B cell (primary cell): ENCODE measurements at regions of chr9 and their contacts with region 1.

Region 1: GRCh38 chr9:113591001-113591898 is 127.7 kb downstream of the RGS3 start:
- DNase-seq: peak; percentile 75
- ATAC-seq: peak; percentile 67
- H3K4me3 ChIP-seq: no peak overlapping the region
- H3K4me3 Mint-ChIP-seq: no peak overlapping the region
- H3K27ac ChIP-seq: no peak overlapping the region
- H3K27ac Mint-ChIP-seq: no peak overlapping the region
- H3K4me1 ChIP-seq: peaks cover 12 to 17% of the 10 kb centered on the region in 2 donors
- H3K4me1 Mint-ChIP-seq: peaks cover 16% of the 10 kb centered on the region
- H3K27me3 ChIP-seq: no peaks in the 10 kb centered on the region
- H3K27me3 Mint-ChIP-seq: no peaks in the 10 kb centered on the region
- CTCF ChIP-seq: peak; percentile 85

Region 2: DNA sequence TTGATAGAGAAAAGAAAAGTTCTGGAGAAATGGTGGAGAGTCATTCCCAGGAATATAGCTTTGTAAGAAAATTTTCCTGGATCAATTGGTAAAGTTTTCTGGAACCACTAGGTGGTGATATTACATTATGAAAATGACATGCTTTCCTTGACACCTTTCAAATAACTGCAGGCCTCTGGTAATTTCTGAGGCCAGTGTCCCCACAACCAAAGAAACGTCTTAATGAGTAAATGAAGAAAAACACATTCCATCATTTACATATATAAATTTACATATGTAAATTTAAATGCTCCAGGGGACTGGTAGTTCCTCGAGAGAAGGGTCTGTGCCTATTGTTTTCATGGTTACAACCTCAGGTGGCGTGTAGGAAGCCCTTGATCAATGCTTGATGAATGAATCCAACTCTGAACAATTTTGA is 144.9 kb before region 1 on chr9:
- CTCF ChIA-PET with region 1: interaction called, 81 read pairs
- POLR2A ChIA-PET with region 1: no interaction called
- intact Hi-C with region 1: no loop called
- DNase-seq: peak; percentile 58
- ATAC-seq: no peak
- H3K4me3 ChIP-seq: no peak overlapping the region
- H3K4me3 Mint-ChIP-seq: no peak overlapping the region
- H3K27ac ChIP-seq: no peak overlapping the region
- H3K27ac Mint-ChIP-seq: no peak overlapping the region
- H3K4me1 ChIP-seq: no peaks in the 10 kb centered on the region
- H3K4me1 Mint-ChIP-seq: no peaks in the 10 kb centered on the region
- H3K27me3 ChIP-seq: no peaks in the 10 kb centered on the region
- H3K27me3 Mint-ChIP-seq: no peaks in the 10 kb centered on the region
- CTCF ChIP-seq: peak; percentile 80

Region 3: DNA sequence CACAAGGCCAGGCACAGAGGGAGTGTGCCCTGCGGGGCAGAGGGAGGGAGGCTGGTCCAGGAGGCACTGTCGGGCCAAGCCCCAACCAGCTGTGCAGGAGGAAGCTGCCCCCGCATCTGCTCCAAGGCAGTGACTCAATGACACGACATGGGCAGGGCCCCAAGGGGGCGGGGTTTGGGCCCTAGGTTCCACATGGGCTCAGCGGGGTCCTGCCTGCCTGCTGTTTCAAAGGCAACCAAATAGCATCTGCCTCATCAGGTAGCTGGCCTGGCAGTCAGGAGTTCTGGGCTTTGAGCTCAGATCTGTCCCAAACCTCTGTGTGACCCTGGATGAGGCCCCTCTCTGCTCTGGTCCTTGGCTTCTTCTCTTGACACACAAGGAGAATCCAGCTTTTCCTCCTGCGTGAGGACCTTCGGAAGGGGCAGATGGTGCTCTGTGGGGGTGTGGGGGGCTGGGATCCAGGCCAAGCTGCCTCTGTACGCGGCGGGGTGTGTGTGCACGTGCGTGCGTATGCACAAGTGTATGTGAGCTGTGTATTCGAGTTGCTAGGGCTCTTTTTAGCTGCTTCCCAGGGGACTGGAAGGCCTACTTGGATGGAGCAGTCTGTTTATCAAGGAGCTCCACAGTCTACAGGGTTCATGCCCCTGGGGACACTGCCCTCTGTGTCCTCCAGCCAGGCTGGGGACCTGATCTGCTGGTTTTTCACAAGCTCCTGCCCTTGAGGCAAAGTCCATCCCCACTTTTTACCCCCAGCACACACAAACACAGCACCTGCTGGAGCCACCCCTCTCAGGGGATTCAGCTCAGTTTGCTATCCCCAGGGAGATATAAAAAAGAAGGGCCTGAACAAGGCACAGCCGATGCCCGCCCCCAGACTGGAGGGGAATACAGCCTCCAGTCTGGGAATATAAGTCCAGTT is 11.1 kb after region 1 on chr9:
- CTCF ChIA-PET with region 1: interaction called, 17 read pairs
- POLR2A ChIA-PET with region 1: no interaction called
- intact Hi-C with region 1: no loop called
- DNase-seq: peak; percentile 38
- ATAC-seq: peak; percentile 74
- H3K4me3 ChIP-seq: no peak overlapping the region
- H3K4me3 Mint-ChIP-seq: no peak overlapping the region
- H3K27ac ChIP-seq: no peak overlapping the region
- H3K27ac Mint-ChIP-seq: no peak overlapping the region
- H3K4me1 ChIP-seq: peaks cover 0 to 15% of the 10 kb centered on the region in 2 donors
- H3K4me1 Mint-ChIP-seq: peaks cover 19% of the 10 kb centered on the region
- H3K27me3 ChIP-seq: peaks cover 0 to 4% (median 0%) of the 10 kb centered on the region in 4 experiments
- H3K27me3 Mint-ChIP-seq: no peaks in the 10 kb centered on the region
- CTCF ChIP-seq: no peak

Region 4: GRCh38 chr9:113673726-113674125 is 82.5 kb after region 1 on chr9:
- CTCF ChIA-PET with region 1: no interaction called
- POLR2A ChIA-PET with region 1: no interaction called
- intact Hi-C with region 1: no loop called
- DNase-seq: no peak
- ATAC-seq: no peak
- H3K4me3 ChIP-seq: no peak overlapping the region
- H3K4me3 Mint-ChIP-seq: no peak overlapping the region
- H3K27ac ChIP-seq: no peak overlapping the region
- H3K27ac Mint-ChIP-seq: no peak overlapping the region
- H3K4me1 ChIP-seq: peaks cover 0 to 5% of the 10 kb centered on the region in 2 donors
- H3K4me1 Mint-ChIP-seq: peaks cover 26% of the 10 kb centered on the region
- H3K27me3 ChIP-seq: peaks cover 0 to 28% (median 5%) of the 10 kb centered on the region in 4 experiments
- H3K27me3 Mint-ChIP-seq: peaks cover 37% of the 10 kb centered on the region
- CTCF ChIP-seq: no peak